ENCODE measurements at regions of chr10 and their contacts with region 1.

Region 1: GRCh38 chr10:79562135-79562756 is 2.0 kb upstream of the SFTPA2 start:
- DNase-seq: peak; percentile 59 to 78 (median 66)
- ATAC-seq: peak; percentile 96
- H3K4me3 ChIP-seq: no peak overlapping the region; the same call in 1 of the 2 replicates
- H3K27ac ChIP-seq: no peak overlapping the region
- H3K4me1 ChIP-seq: peaks cover 0 to 5% of the 10 kb centered on the region in 2 experiments; a peak in 1 of 5 replicates
- H3K27me3 ChIP-seq: peaks cover 0 to 26% of the 10 kb centered on the region in 2 experiments; a peak in 3 of 5 replicates
- CTCF ChIP-seq: peak; percentile 88 to 98 (median 93)
- EP300 ChIP-seq: no peak
- POLR2A ChIP-seq: no peak
- RAD21 ChIP-seq: peak; percentile 88 to 95

Region 2: GRCh38 chr10:79608505-79609375 is 46.5 kb after region 1 on chr10:
- CTCF ChIA-PET with region 1: no interaction called
- POLR2A ChIA-PET with region 1: no interaction called
- in situ Hi-C with region 1: loop called (anchors 5 kb)
- intact Hi-C with region 1: loop called (anchors 2 kb)
- DNase-seq: peak; percentile 56 to 70 (median 66)
- ATAC-seq: peak; percentile 92
- H3K4me3 ChIP-seq: no peak overlapping the region
- H3K27ac ChIP-seq: no peak overlapping the region
- H3K4me1 ChIP-seq: no peaks in the 10 kb centered on the region
- H3K27me3 ChIP-seq: peaks cover 0 to 32% of the 10 kb centered on the region in 2 experiments; a peak in 4 of 5 replicates
- CTCF ChIP-seq: peak; percentile 89 to 98 (median 92)
- EP300 ChIP-seq: no peak
- POLR2A ChIP-seq: no peak
- RAD21 ChIP-seq: peak; percentile 24 to 84; a peak in 2 of 4 replicates

Region 3: DNA sequence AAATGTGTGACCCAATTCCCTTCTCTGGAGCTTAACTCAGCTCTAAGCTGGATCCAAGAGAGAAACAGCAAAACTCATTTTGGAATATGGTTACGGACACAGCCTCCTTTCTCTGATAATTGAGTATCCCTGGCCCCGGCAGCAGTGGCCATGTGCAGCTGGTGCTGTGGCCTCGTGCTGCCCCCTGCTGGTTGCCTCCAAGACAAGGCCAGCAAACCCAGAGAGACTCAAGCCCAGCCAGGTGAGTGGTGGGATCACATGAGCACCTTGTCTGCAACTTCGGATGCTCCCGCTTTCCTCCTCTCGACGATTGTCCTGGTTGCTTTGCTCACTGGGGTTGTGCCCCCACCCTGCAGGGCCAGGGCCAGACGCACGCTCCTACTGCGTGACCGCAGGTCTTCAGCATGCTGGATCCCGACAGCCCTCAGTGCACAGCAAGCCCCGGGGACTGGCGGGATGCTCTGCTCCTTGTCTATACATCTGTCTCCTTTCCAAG is 367.2 kb after region 1 on chr10:
- CTCF ChIA-PET with region 1: interaction called, 12 read pairs
- POLR2A ChIA-PET with region 1: interaction called, 3 read pairs
- in situ Hi-C with region 1: loop called (anchors 10 kb)
- intact Hi-C with region 1: loop called (anchors 1 kb)
- DNase-seq: peak; percentile 83 to 90 (median 88)
- ATAC-seq: peak; percentile 97
- H3K4me3 ChIP-seq: no peak overlapping the region
- H3K27ac ChIP-seq: no peak overlapping the region
- H3K4me1 ChIP-seq: peaks cover 3 to 4% of the 10 kb centered on the region in 2 experiments; a peak in 3 of 5 replicates
- H3K27me3 ChIP-seq: peaks cover 26 to 37% of the 10 kb centered on the region in 2 experiments
- CTCF ChIP-seq: peak; percentile 93 to 98 (median 97)
- EP300 ChIP-seq: no peak
- POLR2A ChIP-seq: no peak
- RAD21 ChIP-seq: peak; percentile 99

Region 4: GRCh38 chr10:79938728-79939406 is 376.6 kb after region 1 on chr10:
- CTCF ChIA-PET with region 1: no interaction called
- POLR2A ChIA-PET with region 1: no interaction called
- in situ Hi-C with region 1: loop called (anchors 10 kb)
- intact Hi-C with region 1: no loop called
- DNase-seq: peak in 1 of 4 experiments; percentile 17
- ATAC-seq: no peak
- H3K4me3 ChIP-seq: no peak overlapping the region
- H3K27ac ChIP-seq: no peak overlapping the region
- H3K4me1 ChIP-seq: no peaks in the 10 kb centered on the region
- H3K27me3 ChIP-seq: peaks cover 27 to 78% of the 10 kb centered on the region in 2 experiments; a peak in 4 of 5 replicates
- CTCF ChIP-seq: no peak
- EP300 ChIP-seq: no peak
- POLR2A ChIP-seq: no peak
- RAD21 ChIP-seq: no peak

Region 5: DNA sequence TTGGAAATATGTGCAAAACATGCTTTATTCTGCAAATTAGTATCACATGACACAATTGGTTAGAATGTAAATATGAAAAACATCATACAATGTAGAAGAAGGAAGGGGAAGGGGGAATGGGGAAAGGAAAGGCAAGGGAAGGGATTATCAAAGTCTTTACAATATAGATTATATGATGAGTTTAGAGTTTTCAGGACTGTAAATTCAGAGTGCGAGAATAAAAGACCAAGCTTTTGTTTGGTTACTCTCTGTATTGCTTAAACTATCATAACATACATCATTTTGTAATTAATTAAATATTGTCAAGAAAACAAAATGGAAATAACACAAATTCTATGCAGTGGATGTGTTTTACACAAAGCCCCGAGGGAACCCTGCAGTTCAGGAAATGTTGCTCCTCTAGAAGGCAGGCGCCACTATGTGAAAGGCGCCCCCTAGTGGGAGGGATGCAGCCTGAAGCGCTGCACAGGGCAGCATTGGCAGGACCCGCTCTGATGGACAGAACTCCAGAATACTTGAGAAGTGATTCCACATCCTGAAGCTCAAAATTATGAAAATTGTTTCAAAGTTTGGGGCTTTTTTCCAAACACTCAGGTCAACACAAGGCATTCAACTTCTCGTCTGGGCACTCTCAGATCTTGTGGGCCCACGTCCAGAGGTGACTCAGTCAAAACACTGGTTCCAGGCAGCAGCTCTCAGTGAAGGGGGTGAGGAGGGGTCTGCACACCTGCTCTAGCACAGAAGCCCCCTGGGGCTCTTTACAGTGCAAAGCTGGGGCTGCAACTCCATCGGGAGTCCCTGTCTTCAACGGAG is 484.6 kb after region 1 on chr10:
- CTCF ChIA-PET with region 1: no interaction called
- POLR2A ChIA-PET with region 1: no interaction called
- in situ Hi-C with region 1: no loop called
- intact Hi-C with region 1: loop called (anchors 5 kb)
- DNase-seq: peak; percentile 71 to 86 (median 84)
- ATAC-seq: peak; percentile 97
- H3K4me3 ChIP-seq: no peak overlapping the region
- H3K27ac ChIP-seq: no peak overlapping the region
- H3K4me1 ChIP-seq: no peaks in the 10 kb centered on the region; a peak in 1 of 5 replicates
- H3K27me3 ChIP-seq: peaks cover 0 to 10% of the 10 kb centered on the region in 2 experiments; a peak in 3 of 5 replicates
- CTCF ChIP-seq: peak; percentile 90 to 95 (median 92)
- EP300 ChIP-seq: no peak
- POLR2A ChIP-seq: no peak
- RAD21 ChIP-seq: peak; percentile 62 to 74

Region 6: DNA sequence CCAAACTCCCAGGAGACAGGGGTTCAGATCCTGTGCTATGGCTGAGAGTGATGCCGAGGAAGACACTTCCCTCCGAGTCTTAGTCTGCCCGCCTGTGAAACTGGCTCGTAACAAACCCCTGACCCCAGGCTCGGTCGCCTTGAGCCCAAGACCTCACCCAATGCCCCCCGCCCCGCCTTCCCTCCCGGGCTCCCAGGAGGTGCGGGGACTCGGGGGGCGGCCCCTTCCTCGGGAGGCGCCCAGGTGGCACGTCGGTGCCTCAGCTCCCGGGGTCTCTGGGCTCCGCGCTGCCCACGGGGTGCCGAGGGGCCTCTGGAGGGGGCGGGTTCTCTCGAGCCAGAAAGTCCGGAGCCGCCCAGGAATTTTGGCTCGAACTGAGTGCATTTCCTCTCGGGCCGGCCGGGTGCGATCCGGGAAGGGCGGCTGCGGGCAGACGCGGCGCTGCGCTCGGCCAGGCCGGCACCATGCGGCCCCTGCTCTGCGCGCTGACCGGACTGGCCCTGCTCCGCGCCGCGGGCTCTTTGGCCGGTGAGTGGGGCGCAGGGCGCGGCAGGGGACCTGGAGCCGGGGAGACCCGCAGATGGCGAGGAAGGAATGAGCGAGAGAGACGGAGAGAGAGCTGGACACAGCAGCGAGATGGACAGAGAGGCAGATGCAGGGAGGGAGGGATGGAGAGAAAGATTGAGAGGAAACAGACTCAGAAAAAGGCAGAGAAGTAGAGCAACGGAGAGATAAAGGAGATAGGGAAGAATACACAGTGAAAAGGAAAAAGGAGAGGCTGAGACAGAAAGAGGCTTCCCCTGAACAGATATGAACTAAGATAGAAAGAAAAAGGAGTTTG is 570.3 kb after region 1 on chr10 and contains the start of gene PLAC9:
- CTCF ChIA-PET with region 1: no interaction called
- POLR2A ChIA-PET with region 1: no interaction called
- in situ Hi-C with region 1: no loop called
- intact Hi-C with region 1: loop called (anchors 2 kb)
- DNase-seq: no peak
- ATAC-seq: no peak
- H3K4me3 ChIP-seq: no peak within 1 kb of the TSS
- H3K27ac ChIP-seq: no peak within 1 kb of the TSS
- H3K4me1 ChIP-seq: peaks cover 0 to 6% of the 10 kb centered on the region in 2 experiments; a peak in 1 of 5 replicates
- H3K27me3 ChIP-seq: peaks cover 34 to 54% of the 10 kb centered on the region in 2 experiments
- CTCF ChIP-seq: no peak
- EP300 ChIP-seq: no peak
- POLR2A ChIP-seq: no peak
- RAD21 ChIP-seq: no peak
- polyA plus RNA-seq, gene PLAC9: not detected